Heart right ventricle (tissue), 16 donors: ENCODE measurements at regions of chr15 and their contacts with region 1.

Region 1: DNA sequence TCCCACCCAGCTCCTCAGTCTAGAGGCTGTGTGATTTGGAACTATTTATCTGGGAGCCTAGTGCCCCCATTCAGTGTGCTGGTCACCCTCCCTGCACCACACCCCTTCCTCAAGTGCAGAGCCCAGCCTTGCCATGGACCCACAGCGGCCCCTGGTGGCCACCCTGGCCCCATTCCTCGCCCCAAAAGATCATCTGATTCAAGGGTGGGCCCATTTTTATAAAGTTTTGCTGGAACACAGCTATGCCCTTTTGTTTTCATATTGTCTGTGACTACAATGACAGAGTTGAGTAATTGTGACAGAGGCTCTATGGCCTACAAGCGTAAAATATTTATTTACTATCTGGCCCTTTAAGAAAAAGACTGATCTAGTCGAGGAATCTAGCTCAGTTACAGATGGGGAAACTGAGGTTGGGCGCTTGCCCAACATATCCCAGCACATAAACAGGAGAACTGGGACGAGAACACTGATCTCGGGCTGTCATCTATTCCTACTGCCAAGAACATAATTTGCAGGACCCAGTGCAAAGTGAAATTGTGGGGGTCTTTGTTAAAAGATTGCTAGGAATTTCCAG is 1.8 kb downstream of the FES start:
- DNase-seq: peak; percentile 86 to 88
- ATAC-seq: peak; percentile 50 to 81 (median 69)
- H3K4me3 ChIP-seq: peak overlapping the region in 9 of 10 donors; percentile 47 to 83 (median 73)
- H3K27ac ChIP-seq: peak overlapping the region; percentile 88 to 100 (median 97)
- H3K4me1 ChIP-seq: peaks cover 16 to 66% (median 50%) of the 10 kb centered on the region in 9 donors
- H3K27me3 ChIP-seq: no peaks in the 10 kb centered on the region
- CTCF ChIP-seq: peak; percentile 95 to 100 (median 99)

Region 2: GRCh38 chr15:90529371-90530249 is 356.5 kb before region 1 on chr15 and contains the start of gene CRTC3:
- intact Hi-C with region 1: loop called in 1 of 10 experiments (anchors 10 kb)
- DNase-seq: peak; percentile 34 to 60
- ATAC-seq: peak; percentile 79 to 96 (median 88)
- H3K4me3 ChIP-seq: peak within 1 kb of the TSS; percentile 53 to 96 (median 90)
- H3K27ac ChIP-seq: peak within 1 kb of the TSS; percentile 90 to 97 (median 95)
- H3K4me1 ChIP-seq: peaks cover 3 to 47% (median 32%) of the 10 kb centered on the region in 9 donors
- H3K27me3 ChIP-seq: no peaks in the 10 kb centered on the region
- CTCF ChIP-seq: peak in 2 of 9 donors; percentile 5 to 14
- total RNA-seq, gene CRTC3: 25.1 to 34.9 (median 29.4) TPM

Region 3: DNA sequence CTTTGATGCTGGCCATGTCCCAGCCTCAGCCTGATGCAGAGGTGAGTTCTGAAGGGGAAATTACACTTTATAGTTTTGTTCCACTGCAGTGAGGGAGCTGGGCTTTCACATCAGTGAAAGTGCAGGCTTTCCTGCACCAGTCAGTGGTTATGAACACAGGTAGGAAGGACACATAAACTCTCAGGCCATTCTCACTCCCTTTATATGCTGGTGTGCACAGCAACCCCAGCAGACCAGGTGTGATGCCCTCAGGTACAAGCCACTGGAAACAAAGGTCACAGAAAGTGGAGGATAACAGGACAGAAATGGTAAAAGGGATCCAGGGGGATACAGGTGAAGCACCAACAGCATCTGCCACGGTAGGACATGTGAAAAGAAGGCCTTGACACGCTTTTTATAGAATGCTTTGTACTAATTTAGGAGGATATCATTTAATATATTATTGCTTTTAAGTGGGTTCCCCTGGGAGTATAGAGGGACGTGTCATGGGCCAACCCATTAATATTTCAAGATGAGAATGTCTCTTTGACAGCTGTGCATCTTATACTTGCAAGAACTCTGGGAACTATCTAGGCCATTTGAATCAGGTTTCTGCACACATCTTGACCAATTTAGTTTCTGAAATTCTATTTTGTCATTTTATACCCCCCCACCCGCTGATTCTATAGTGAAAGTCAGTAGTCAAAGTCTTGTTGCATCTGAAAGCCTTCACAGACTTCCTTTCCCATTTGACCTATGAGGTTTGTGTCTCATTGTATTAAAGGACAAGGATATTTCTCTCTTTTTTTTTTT is 193.9 kb before region 1 on chr15:
- intact Hi-C with region 1: loop called in 2 of 10 experiments (anchors 5 kb)
- DNase-seq: no peak
- ATAC-seq: no peak
- H3K4me3 ChIP-seq: no peak overlapping the region
- H3K27ac ChIP-seq: no peak overlapping the region
- H3K4me1 ChIP-seq: peaks cover 0 to under 1% (median 0%) of the 10 kb centered on the region in 9 donors
- H3K27me3 ChIP-seq: no peaks in the 10 kb centered on the region
- CTCF ChIP-seq: no peak

Region 4: GRCh38 chr15:90716976-90717821 is 168.9 kb before region 1 on chr15 and contains the start of gene BLM:
- intact Hi-C with region 1: loop called in 4 of 10 experiments (anchors 5 to 10 kb)
- DNase-seq: peak; percentile 95
- ATAC-seq: peak; percentile 100
- H3K4me3 ChIP-seq: peak within 1 kb of the TSS; percentile 35 to 76 (median 70)
- H3K27ac ChIP-seq: peak within 1 kb of the TSS; percentile 74 to 96 (median 88)
- H3K4me1 ChIP-seq: peaks cover 2 to 18% (median 14%) of the 10 kb centered on the region in 9 donors
- H3K27me3 ChIP-seq: no peaks in the 10 kb centered on the region
- CTCF ChIP-seq: peak in 8 of 9 donors; percentile 27 to 58 (median 48)
- total RNA-seq, gene BLM: 3.5 to 35.0 (median 7.9) TPM